Activated naive CD4-positive, alpha-beta T cell treated with anti-CD3 and anti-CD28 coated beads for 36 hours (primary cell): ENCODE measurements at regions of chr11 and their contacts with region 1.

Region 1: DNA sequence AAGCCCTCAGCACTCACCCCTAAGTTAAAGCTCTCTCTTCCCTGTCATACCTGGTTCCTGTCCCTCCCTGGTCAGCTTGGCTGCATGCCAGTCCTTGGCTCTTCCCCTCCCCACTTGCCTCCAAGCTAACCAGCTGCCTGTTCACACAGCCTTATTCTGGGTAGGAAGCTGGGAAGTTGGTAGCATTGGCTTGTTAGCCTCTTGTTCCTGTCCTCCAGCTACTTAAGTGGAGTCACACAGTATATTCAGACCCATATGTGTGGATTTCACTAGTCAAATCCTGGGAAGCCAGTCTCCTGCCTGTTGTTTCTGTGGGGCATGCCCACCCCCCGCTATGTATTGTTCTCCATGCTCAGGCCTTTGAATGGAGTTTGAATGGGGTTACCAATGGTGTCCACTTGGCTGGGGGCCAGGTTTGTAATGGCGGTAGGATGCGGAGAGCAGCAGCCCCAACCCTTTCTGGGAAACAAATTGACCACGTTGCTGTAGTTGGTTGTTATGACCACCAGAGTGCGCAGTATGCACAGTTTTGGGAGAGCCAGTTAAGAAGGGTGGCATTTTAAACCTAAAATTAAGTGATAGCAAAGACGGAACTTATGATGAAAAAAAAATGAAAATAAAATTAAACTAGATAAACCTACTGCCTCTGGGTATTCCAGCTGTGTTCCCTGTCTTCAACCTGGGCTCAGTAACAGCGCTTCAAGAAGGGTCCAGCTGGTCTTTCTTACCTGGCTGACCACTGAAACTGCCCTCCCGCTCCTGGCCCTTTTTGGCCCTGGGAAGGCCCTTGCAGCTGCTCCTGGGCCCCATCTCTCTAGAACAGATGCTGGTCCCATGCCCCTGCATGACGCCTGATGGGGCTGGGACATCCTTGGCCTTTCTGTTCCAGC is 10.7 kb upstream of the RPS3 start:
- DNase-seq: peak; percentile 88
- H3K4me3 Mint-ChIP-seq: no peak overlapping the region
- H3K27ac Mint-ChIP-seq: no peak overlapping the region
- H3K4me1 Mint-ChIP-seq: peaks cover 11% of the 10 kb centered on the region
- H3K27me3 Mint-ChIP-seq: no peaks in the 10 kb centered on the region

Region 2: DNA sequence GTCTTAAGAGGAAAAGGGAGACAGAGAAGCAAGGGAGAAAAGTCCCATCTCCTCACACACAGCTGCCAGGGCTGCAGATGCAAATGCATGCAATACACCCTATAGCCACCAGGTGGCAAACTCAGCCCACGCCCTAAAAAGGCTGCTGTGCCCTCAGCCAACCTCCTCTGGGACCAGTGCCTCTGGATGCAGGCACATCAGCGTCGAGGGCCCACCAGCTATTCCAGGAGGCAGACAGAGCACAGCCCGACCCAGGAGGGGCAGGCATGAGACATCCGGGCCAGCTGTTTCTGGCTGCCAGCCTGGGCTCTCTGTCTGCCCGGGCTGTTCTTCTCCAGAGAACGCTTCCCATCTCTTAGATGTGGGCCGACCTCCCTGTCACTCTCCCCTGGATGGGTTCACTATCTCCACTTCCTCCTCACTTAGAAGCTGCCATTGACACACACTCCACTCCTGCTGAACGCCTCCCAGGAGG is 108.4 kb before region 1 on chr11:
- CTCF ChIA-PET with region 1: interaction called, 374 read pairs
- intact Hi-C with region 1: loop called (anchors 1 kb)
- DNase-seq: peak; percentile 86
- H3K4me3 Mint-ChIP-seq: no peak overlapping the region
- H3K27ac Mint-ChIP-seq: peak overlapping the region; percentile 73
- H3K4me1 Mint-ChIP-seq: peaks cover 38% of the 10 kb centered on the region
- H3K27me3 Mint-ChIP-seq: no peaks in the 10 kb centered on the region

Region 3: GRCh38 chr11:75328426-75329277 is 60.0 kb before region 1 on chr11:
- CTCF ChIA-PET with region 1: interaction called, 72 read pairs
- intact Hi-C with region 1: loop called (anchors 1 kb)
- DNase-seq: peak; percentile 85
- H3K4me3 Mint-ChIP-seq: peak overlapping the region; percentile 25
- H3K27ac Mint-ChIP-seq: peak overlapping the region; percentile 74
- H3K4me1 Mint-ChIP-seq: peaks cover 78% of the 10 kb centered on the region
- H3K27me3 Mint-ChIP-seq: no peaks in the 10 kb centered on the region

Region 4: DNA sequence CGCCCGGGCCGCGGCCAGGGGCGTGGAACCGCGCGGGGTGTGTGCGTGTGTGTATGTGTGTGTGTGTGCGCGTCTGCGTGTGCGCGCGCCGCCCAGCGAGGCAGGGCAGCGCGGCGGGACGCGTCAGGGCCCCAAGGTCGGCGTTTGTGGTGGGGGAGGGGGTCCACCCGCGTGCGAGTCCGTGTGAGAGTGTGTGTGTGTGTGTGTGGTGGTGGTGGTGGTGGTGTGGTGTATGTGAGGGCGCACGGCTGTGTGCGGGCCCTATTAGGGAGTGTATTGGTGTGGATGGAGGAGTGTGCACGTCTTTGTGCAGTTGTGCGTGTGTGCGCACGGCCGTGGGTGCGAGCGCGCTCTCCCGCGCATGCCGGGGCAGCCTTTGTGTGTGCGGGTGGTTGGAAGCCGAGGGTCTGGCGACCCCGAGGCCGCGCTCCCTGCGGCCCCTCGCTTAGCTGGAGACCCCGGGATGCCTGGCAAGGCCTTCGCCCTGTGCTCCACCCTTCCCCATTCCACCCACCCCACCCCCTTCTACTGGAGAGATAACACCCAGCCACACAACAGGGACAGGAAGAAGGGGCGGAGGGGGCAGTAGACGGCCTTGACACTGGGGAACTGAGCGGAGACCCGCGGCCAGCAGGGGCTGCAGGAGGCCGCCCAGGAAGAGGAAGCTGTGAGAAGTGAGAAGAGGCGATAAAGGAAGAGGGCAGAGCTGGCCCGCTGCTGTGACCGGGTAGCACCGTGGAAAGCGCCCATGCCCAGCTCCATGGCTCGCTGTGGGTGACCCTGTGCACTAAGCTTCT is 36.6 kb before region 1 on chr11:
- CTCF ChIA-PET with region 1: interaction called, 11 read pairs
- intact Hi-C with region 1: loop called (anchors 2 kb)
- DNase-seq: peak; percentile 54
- H3K4me3 Mint-ChIP-seq: peak overlapping the region; percentile 84
- H3K27ac Mint-ChIP-seq: peak overlapping the region; percentile 75
- H3K4me1 Mint-ChIP-seq: peaks cover 55% of the 10 kb centered on the region
- H3K27me3 Mint-ChIP-seq: no peaks in the 10 kb centered on the region

Region 5: GRCh38 chr11:75399344-75400145 is 10.9 kb after region 1 on chr11 and contains the start of gene RPS3:
- CTCF ChIA-PET with region 1: interaction called, 10 read pairs
- intact Hi-C with region 1: loop called (anchors 1 kb)
- DNase-seq: peak; percentile 90
- H3K4me3 Mint-ChIP-seq: peak within 1 kb of the TSS; percentile 92
- H3K27ac Mint-ChIP-seq: peak within 1 kb of the TSS; percentile 92
- H3K4me1 Mint-ChIP-seq: peaks cover 44% of the 10 kb centered on the region
- H3K27me3 Mint-ChIP-seq: no peaks in the 10 kb centered on the region
- total RNA-seq, gene RPS3: 5,069 to 5,116 TPM

Region 6: GRCh38 chr11:75532200-75533048 is 143.8 kb after region 1 on chr11:
- CTCF ChIA-PET with region 1: interaction called, 74 read pairs
- intact Hi-C with region 1: loop called (anchors 1 kb)
- DNase-seq: peak; percentile 91
- H3K4me3 Mint-ChIP-seq: no peak overlapping the region
- H3K27ac Mint-ChIP-seq: no peak overlapping the region
- H3K4me1 Mint-ChIP-seq: peaks cover 14% of the 10 kb centered on the region
- H3K27me3 Mint-ChIP-seq: no peaks in the 10 kb centered on the region

Region 7: DNA sequence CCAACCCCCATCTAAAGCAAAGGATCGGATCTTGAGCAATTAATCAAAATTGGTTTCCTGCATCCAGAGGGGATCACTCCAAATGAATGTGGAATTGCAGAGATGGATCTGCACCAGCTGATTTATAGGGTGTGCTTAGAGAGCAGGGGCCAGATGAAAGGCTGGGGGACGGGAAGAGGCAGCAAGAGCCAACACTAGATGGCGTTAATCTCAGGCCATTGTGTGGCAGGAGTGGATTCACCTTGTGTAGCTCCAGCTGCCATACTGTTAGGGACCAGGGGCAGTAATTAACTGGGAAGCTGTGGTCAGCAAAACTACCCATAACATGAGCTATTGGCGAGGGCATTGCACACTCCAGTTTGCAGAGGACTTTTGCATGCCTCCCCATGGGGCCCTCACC is 209.0 kb after region 1 on chr11:
- CTCF ChIA-PET with region 1: no interaction called
- intact Hi-C with region 1: no loop called
- DNase-seq: no peak
- H3K4me3 Mint-ChIP-seq: no peak overlapping the region
- H3K27ac Mint-ChIP-seq: no peak overlapping the region
- H3K4me1 Mint-ChIP-seq: no peaks in the 10 kb centered on the region
- H3K27me3 Mint-ChIP-seq: no peaks in the 10 kb centered on the region